ENCODE measurements at regions of chr3 and their contacts with region 1.

Region 1: GRCh38 chr3:143056372-143056771 is 55.0 kb downstream of the U2SURP start:
- H3K4me3 Mint-ChIP-seq: no peak overlapping the region
- H3K27ac Mint-ChIP-seq: no peak overlapping the region
- H3K4me1 Mint-ChIP-seq: no peaks in the 10 kb centered on the region
- H3K27me3 Mint-ChIP-seq: no peaks in the 10 kb centered on the region

Region 2: DNA sequence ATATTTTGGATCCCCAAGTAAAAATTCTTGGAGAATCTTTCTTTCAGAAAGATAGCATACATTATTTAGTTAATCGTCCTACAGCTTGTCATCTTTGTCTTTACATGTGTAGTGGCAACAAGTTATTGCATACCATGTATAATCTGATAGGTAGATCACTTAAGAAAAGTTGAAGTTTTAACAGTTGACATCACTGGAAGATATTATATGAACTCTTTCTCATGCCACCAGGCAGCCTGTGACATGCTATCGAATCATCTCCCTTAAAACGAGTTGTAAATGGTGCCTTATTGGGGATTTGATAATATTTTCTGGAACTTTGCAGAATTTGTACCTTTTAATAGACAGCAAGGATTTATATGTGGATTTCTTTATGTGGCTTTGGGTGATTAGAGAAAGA is 46.3 kb before region 1 on chr3:
- intact Hi-C with region 1: no loop called
- H3K4me3 Mint-ChIP-seq: no peak overlapping the region
- H3K27ac Mint-ChIP-seq: no peak overlapping the region
- H3K4me1 Mint-ChIP-seq: peaks cover 28% of the 10 kb centered on the region
- H3K27me3 Mint-ChIP-seq: no peaks in the 10 kb centered on the region

Region 3: GRCh38 chr3:143674100-143674968 is 618.0 kb after region 1 on chr3:
- intact Hi-C with region 1: loop called (anchors 10 kb)
- H3K4me3 Mint-ChIP-seq: no peak overlapping the region
- H3K27ac Mint-ChIP-seq: no peak overlapping the region
- H3K4me1 Mint-ChIP-seq: peaks cover 5% of the 10 kb centered on the region
- H3K27me3 Mint-ChIP-seq: no peaks in the 10 kb centered on the region

Region 4: GRCh38 chr3:144003051-144003450 is 946.7 kb after region 1 on chr3:
- intact Hi-C with region 1: no loop called
- H3K4me3 Mint-ChIP-seq: no peak overlapping the region
- H3K27ac Mint-ChIP-seq: no peak overlapping the region
- H3K4me1 Mint-ChIP-seq: peaks cover 12% of the 10 kb centered on the region
- H3K27me3 Mint-ChIP-seq: peaks cover 12% of the 10 kb centered on the region